HEK293 (cell line): ENCODE measurements at regions of chr2 and their contacts with region 1.

Region 1: GRCh38 chr2:38508311-38509039 is 94.3 kb downstream of the HNRNPLL start:
- H3K4me3 ChIP-seq: no peak overlapping the region
- H3K27ac ChIP-seq: peak overlapping the region; percentile 3; the same call in 1 of the 2 replicates
- H3K4me1 ChIP-seq: no peaks in the 10 kb centered on the region
- CTCF ChIP-seq: peak; percentile 64

Region 2: DNA sequence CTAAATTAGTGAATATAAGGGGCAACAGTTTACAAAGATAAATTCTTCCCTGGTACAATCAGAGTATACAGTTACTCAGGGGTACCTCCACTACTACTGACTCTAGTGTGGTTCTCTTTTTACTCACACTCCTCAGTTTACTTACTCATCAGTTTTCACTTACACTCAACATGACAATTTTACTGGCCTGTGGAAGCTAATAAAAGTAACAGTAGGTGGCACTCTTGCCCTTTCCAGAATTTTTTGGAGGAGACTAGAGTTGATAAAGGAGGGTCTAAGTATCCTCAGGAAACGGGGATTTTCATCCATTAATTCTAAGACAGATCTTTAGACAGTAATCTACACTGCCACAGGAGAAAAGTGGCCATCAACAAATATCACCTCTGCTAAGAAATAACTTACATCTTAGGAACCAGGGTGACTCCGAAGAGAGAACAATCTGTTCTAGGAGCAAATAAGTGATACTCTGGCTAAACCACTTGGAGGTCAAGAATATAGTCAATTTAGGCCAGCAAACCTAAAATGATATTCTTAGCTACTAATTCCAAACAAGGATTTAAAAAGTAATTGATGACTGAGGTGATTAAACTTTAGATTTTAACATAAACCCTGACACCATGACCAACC is 192.7 kb before region 1 on chr2:
- CTCF ChIA-PET with region 1: interaction called, 142 read pairs
- POLR2A ChIA-PET with region 1: interaction called, 3 read pairs
- H3K4me3 ChIP-seq: no peak overlapping the region
- H3K27ac ChIP-seq: no peak overlapping the region
- H3K4me1 ChIP-seq: peaks cover 3% of the 10 kb centered on the region; the same call in 1 of the 2 replicates
- CTCF ChIP-seq: no peak; the same call in 1 of the 2 replicates

Region 3: GRCh38 chr2:38323623-38324022 is 184.9 kb before region 1 on chr2:
- CTCF ChIA-PET with region 1: interaction called, 142 read pairs
- POLR2A ChIA-PET with region 1: no interaction called
- H3K4me3 ChIP-seq: no peak overlapping the region
- H3K27ac ChIP-seq: no peak overlapping the region
- H3K4me1 ChIP-seq: peaks cover 21% of the 10 kb centered on the region
- CTCF ChIP-seq: no peak

Region 4: DNA sequence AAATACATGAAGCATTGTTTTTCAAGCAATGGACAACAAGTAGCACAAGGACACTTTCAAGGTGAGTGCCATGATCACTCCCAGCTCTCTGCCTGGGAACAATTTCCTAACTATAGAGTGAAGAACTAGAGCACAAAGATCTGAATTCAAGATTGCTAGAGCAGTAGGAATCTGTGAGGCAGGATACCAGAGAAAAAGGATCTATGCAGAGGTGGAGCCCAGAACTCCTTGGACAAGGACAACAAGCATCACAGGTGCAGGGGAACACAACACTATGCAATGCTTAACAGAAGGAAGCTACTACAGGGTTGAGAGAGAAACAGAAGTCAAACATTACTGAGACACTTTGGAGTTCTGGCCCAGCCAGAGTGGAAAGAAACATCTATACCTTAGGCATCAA is 156.1 kb before region 1 on chr2:
- CTCF ChIA-PET with region 1: no interaction called
- POLR2A ChIA-PET with region 1: no interaction called
- H3K4me3 ChIP-seq: no peak overlapping the region
- H3K27ac ChIP-seq: no peak overlapping the region
- H3K4me1 ChIP-seq: peaks cover 2% of the 10 kb centered on the region; the same call in 1 of the 2 replicates
- CTCF ChIP-seq: no peak

Region 5: DNA sequence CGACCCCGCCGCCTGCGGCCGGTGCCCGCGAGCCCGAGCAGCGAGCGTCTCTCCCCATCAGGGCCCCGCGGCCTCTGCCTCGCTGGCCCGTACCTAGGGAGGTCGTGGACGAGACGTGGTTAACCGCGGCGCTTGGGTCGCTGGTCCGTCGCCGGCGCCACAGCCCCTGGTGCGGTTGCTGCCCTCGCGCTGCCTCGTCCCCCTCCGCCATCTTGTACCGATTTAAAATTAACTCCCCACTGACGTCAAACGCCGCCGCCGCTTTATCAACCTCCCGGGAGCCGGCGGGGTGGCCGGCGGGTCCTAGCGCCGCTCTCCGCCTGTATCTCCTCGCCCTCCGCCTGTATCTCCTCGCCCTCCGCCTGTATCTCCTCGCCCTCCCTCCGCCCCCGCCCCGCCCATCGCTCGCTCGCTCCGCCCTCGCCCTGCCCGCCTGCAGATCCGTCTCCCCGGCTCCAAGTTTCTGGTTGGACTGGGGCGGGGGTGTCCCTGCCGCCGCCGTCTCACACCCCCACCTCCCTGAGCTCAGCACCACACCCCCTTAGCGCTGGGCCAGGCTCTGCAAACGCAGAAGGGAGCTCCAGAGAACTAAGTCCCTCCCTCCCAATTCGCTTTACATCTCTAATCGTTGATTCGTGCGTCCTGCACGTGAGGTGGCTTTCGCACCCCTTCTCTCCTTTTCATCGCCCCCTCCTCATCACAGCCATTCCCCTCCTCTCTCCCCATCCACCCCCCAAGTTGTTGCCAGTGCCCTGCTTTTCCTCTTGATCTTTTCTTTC is 131.2 kb before region 1 on chr2 and contains the start of gene ATL2:
- CTCF ChIA-PET with region 1: interaction called, 35 read pairs
- POLR2A ChIA-PET with region 1: interaction called, 7 read pairs
- H3K4me3 ChIP-seq: peak within 1 kb of the TSS; percentile 92
- H3K27ac ChIP-seq: peak within 1 kb of the TSS; percentile 98
- H3K4me1 ChIP-seq: peaks cover 31% of the 10 kb centered on the region
- CTCF ChIP-seq: peak; percentile 24; the same call in 1 of the 2 replicates

Region 6: DNA sequence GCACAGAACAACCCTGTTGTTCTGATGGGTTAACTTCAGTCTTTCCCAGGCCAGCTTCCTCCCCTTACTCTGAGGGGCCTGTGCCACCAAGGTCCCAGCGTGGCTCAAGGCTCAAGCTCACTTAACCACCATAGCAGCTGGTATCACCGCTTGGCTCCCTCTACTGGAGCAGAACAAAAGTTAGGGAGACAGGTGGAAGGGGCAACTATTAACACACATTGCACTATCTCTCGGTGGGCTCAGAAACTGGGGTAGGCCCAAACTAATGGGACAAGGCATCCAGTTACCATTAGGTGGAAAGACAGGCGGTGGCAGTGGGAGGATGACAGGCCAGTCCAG is 42.7 kb before region 1 on chr2:
- CTCF ChIA-PET with region 1: interaction called, 26 read pairs
- POLR2A ChIA-PET with region 1: no interaction called
- H3K4me3 ChIP-seq: no peak overlapping the region
- H3K27ac ChIP-seq: no peak overlapping the region
- H3K4me1 ChIP-seq: peaks cover 16% of the 10 kb centered on the region
- CTCF ChIP-seq: peak; percentile 61; the same call in 1 of the 2 replicates

Region 7: DNA sequence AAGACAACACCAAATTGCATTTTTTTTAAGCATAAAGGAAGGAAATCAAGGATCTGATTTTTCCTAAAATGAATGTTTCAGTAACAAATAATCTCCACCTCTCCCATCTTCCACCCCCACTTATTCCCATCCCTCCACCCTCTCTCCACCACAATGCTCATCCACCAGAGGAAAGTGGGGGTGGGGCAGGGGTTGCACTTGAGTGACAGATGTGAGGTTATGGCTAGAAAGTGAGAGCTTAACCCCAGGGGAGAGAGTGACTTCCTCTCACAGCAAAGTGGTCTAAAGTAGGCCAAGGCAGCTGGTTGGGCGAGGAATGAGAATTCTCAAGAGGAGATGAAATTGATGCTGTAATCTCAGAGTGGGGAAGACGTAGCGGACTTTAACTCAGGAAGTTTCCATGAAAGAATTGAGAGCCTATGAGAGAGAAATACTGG is 10.4 kb before region 1 on chr2:
- CTCF ChIA-PET with region 1: interaction called, 25 read pairs
- POLR2A ChIA-PET with region 1: no interaction called
- H3K4me3 ChIP-seq: no peak overlapping the region
- H3K27ac ChIP-seq: no peak overlapping the region
- H3K4me1 ChIP-seq: peaks cover 2% of the 10 kb centered on the region; the same call in 1 of the 2 replicates
- CTCF ChIP-seq: no peak

Region 8: DNA sequence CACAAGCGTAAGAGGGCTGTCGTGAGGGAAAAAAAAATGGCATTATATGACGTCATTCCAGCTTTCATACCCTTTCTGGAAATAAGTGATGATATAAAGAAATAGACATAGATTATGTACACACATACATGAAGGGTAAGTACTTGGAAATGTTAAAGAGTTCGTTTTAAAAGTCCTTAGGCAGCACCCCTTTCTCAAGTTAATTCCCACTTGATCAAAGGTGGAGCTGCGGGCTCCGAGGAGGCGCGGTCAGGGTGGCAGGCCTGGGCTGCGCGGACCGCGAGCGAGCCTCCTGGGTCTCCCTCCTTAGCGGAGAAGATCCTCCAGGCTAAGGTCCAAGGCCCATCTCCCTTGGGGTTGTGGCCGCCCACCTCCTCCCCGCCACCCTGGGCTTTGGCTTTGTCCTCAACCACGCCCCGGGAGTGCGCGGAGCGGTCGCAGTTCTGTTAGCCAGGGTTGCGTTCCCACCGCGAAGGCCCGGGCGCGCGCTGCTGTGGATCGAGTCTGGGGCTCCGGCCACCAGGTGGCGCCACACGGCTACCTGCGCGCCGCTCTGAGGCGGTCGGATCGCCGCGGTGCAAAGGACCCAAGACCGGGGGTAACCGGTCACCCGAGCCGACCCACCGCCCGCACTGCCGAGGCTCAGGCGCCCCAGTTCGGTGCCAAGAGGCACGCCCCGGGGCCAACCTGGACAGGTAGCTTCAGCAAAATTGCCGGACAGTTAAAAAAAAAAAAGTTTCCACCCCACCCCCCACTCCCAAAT is 27.4 kb after region 1 on chr2:
- CTCF ChIA-PET with region 1: interaction called, 12 read pairs
- POLR2A ChIA-PET with region 1: no interaction called
- H3K4me3 ChIP-seq: peak overlapping the region; percentile 46
- H3K27ac ChIP-seq: peak overlapping the region; percentile 24; the same call in 1 of the 2 replicates
- H3K4me1 ChIP-seq: peaks cover 4% of the 10 kb centered on the region
- CTCF ChIP-seq: peak; percentile 94